Endothelial cell of umbilical vein (primary cell): ENCODE measurements at regions of chrX and their contacts with region 1.

Region 1: GRCh38 chrX:54044126-54044876 is at the start of gene PHF8:
- DNase-seq: peak; percentile 95
- H3K4me3 ChIP-seq: peak within 1 kb of the TSS; percentile 66 to 87 (median 70)
- H3K27ac ChIP-seq: peak within 1 kb of the TSS; percentile 81
- H3K4me1 ChIP-seq: peaks cover 13% of the 10 kb centered on the region
- H3K27me3 ChIP-seq: no peaks in the 10 kb centered on the region
- CTCF ChIP-seq: no peak
- POLR2A ChIP-seq: peak; percentile 70
- total RNA-seq, gene PHF8: 23.2 and 25.5 TPM in 2 replicates

Region 2: DNA sequence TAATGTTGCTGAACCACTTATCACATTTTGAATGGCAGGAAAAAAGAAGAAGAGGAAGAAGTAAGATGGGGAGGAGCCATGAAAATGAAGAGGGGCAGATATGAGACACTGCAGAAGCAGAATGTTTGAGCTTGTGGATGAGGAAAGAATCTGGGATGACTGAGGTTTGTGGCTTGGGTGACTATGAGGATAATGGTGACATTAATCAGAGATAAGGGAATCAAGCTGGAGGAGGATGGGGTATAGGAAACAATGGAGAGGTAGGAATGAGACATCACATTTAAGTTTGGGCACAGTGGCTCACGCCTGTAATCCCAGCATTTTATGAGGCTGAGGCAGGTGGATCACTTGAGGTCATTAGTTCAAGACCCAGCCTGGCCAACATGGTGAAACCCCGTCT is 19.1 kb after region 1 on chrX:
- CTCF ChIA-PET with region 1: no interaction called
- POLR2A ChIA-PET with region 1: interaction called, 10 read pairs
- dilution Hi-C with region 1: no loop called
- intact Hi-C with region 1: no loop called
- DNase-seq: no peak
- H3K4me3 ChIP-seq: no peak overlapping the region
- H3K27ac ChIP-seq: no peak overlapping the region
- H3K4me1 ChIP-seq: no peaks in the 10 kb centered on the region
- H3K27me3 ChIP-seq: no peaks in the 10 kb centered on the region
- CTCF ChIP-seq: no peak
- POLR2A ChIP-seq: no peak

Region 3: DNA sequence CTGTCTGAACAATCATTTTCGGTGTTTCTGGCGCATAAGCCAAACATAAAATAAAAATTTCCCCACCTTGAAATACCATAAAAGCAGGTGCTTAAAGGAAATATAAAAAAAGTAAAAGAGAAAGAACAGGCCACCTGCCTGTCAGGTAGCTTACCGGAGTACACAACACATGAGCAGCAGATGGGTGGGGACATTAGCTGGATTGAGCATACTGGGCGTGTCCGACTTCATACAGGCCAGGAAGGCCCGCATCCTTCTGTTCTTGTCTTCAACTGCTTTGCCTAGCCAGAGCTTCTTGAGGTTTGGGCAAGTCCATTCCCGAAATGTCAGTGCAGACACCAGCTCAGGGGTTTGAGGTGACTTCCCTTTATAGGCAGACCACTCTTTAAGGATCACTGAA is 72.1 kb after region 1 on chrX:
- CTCF ChIA-PET with region 1: no interaction called
- POLR2A ChIA-PET with region 1: no interaction called
- dilution Hi-C with region 1: no loop called
- intact Hi-C with region 1: no loop called
- DNase-seq: no peak
- H3K4me3 ChIP-seq: no peak overlapping the region
- H3K27ac ChIP-seq: no peak overlapping the region
- H3K4me1 ChIP-seq: no peaks in the 10 kb centered on the region
- H3K27me3 ChIP-seq: no peaks in the 10 kb centered on the region
- CTCF ChIP-seq: no peak
- POLR2A ChIP-seq: no peak

Region 4: DNA sequence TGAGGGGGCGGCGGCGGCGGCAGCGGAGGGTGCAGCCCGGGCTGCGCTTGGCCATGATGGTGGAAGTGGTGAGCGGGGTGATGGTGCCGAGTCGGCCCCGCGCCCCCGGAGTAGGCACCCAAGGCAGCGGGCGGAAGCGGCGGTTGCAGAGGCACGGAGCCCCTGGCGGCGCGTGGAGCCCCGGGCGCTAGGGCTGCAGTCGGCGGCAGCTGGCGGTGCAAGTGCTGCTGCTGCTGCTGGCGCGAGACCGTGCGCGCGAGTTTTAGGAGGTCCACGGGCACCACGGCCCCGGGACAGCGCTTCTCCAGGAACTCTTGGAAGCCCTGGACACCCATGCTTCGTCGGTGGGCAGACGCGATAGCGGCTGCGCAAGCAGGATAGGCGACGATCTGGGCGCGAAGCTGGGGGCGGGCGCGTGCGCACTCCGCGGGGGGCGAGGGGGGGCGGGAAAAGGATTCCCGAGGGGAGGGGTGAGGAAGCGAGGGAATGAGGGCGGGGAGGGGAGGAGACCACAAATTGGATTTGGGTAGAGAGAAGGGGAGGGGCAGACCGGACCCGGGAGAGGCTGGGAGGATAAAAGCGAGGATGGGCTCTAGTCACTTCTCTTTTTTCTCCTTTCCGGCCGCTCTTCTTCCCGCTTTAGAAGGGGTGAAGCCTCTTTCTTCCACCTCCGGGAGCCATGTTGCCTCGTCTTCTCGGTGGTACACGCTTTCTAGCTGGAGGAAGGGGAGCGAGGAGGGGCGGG is 138.7 kb after region 1 on chrX and contains the start of gene FAM120C:
- CTCF ChIA-PET with region 1: interaction called, 7 read pairs
- POLR2A ChIA-PET with region 1: interaction called, 3 read pairs
- dilution Hi-C with region 1: no loop called
- intact Hi-C with region 1: loop called (anchors 1 kb)
- DNase-seq: peak; percentile 76
- H3K4me3 ChIP-seq: peak within 1 kb of the TSS; percentile 55 to 81 (median 81)
- H3K27ac ChIP-seq: peak within 1 kb of the TSS; percentile 72
- H3K4me1 ChIP-seq: peaks cover 35% of the 10 kb centered on the region
- H3K27me3 ChIP-seq: no peaks in the 10 kb centered on the region
- CTCF ChIP-seq: no peak
- POLR2A ChIP-seq: peak; percentile 55
- total RNA-seq, gene FAM120C: 10.1 and 11.4 TPM in 2 replicates

Region 5: DNA sequence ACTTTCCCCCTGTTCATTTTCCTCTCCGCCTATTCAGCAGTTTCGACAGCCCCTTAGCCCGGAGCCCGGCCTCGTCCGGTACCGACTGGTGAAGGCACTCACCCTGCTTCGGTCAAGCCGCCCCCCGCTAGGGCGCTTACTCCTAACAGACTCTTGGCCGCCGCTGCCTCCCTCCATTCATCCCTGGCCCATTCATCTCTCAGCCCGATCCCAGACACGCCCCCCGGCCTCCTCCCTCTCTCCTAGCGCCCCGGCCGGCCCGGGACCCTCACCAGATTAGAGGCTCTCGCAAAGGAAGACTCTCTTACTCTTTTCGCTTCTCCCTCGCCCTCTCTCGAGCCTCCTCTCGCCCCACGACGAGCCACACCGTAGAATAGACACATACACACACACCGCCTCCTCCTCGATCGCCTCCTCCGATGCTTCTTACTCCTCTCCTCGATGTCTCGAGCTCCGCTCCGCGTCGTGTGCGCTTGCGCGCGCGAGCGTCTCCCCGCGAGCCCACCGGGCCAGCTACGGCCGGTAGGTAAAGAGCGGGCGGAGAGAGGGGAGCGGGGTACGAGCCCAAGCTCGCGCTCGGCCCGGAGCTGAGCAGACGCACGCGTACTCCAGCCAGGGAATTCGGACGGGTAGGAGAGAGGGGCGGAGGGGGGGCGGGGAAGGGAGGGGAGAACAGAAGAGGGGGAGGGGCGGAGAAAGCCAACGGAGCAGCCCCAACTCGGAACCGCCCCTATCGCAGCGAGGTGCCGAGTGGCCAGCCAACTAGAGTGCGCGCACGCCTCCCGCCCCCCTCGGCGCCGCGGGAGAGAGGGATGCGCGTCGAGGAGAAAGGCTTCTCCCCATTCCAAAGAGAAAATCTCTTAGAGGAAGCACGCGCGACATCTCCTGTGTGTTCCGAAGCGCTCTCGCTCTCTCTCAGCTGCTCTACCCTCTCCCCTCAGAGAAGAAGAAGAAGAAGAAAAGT is 313.4 kb after region 1 on chrX and contains the start of gene WNK3:
- CTCF ChIA-PET with region 1: interaction called, 3 read pairs
- POLR2A ChIA-PET with region 1: interaction called, 5 read pairs
- dilution Hi-C with region 1: no loop called
- intact Hi-C with region 1: loop called (anchors 1 kb)
- DNase-seq: peak; percentile 69
- H3K4me3 ChIP-seq: peak within 1 kb of the TSS; percentile 18 to 56 (median 44)
- H3K27ac ChIP-seq: no peak within 1 kb of the TSS
- H3K4me1 ChIP-seq: no peaks in the 10 kb centered on the region
- H3K27me3 ChIP-seq: peaks cover 3 to 6% of the 10 kb centered on the region in 2 experiments
- CTCF ChIP-seq: no peak
- POLR2A ChIP-seq: no peak
- total RNA-seq, gene WNK3: 2.6 and 2.7 TPM in 2 replicates